Activated CD4-positive, alpha-beta memory T cell treated with anti-CD3 and anti-CD28 coated beads for 36 hours (primary cell): ENCODE measurements at regions of chr2 and their contacts with region 1.

Region 1: DNA sequence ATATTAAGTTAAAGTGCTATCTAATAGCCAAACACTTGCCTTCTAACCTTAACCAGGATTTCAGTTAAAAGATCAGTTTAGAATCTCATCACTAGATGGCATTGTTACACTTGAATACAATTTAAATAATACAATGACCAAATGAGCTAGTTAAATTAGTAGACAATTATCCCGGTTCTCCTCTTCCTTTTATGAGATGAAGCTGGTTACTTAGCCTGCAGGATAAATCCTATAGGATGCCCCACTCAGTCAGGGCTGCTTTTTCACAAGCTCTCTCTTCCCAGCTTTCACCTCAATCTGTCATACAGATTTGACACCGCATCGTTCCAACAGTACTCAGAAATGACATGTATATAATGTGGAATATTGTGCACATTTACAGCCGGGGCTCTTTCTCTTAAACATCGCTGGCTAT is 678.8 kb downstream of the KCNJ3 start:
- DNase-seq: no peak
- H3K4me3 Mint-ChIP-seq: no peak overlapping the region
- H3K27ac Mint-ChIP-seq: no peak overlapping the region
- H3K4me1 Mint-ChIP-seq: peaks cover 20% of the 10 kb centered on the region
- H3K27me3 Mint-ChIP-seq: no peaks in the 10 kb centered on the region

Region 2: DNA sequence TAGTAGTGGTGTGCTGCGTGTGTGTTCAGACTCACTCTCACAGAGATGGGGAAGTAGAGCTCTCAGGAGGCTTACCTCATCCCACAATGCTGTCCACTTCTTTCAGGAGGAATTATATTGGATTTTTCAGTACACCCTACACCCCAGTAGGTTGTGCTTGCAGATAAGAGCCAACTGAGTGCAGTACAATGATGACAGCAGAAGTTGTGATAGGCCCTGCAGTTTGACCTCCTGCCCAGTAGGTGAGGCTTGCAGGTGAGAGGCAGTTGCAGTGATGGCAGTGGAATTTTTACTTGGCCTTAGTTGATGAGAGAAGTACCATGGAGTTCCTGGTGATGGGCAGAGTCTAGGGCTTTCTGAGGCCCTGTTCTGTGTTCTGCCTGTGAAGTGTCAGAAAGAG is 21.0 kb before region 1 on chr2:
- CTCF ChIA-PET with region 1: no interaction called
- POLR2A ChIA-PET with region 1: no interaction called
- intact Hi-C with region 1: no loop called
- DNase-seq: no peak
- H3K4me3 Mint-ChIP-seq: no peak overlapping the region
- H3K27ac Mint-ChIP-seq: no peak overlapping the region
- H3K4me1 Mint-ChIP-seq: no peaks in the 10 kb centered on the region
- H3K27me3 Mint-ChIP-seq: no peaks in the 10 kb centered on the region

Region 3: DNA sequence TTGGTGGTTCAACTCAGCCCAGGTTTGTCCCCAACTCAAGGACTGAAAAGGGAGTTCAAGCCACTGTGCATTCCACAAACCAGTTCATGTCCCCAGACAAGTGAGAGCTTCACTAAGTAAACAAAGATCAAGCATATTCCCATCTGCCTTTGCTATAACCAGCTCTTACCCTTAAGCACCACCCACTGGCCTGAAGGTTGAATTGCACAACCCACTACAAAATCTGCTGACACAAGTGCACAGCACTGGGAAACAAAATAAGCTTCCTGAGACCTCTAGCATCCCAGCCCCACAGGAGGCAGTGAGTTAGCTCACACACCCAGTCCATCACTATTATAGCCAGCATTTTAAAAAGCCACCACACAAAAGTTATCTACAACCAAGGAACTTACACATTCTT is 438.6 kb after region 1 on chr2:
- CTCF ChIA-PET with region 1: no interaction called
- POLR2A ChIA-PET with region 1: no interaction called
- intact Hi-C with region 1: loop called (anchors 1 kb)
- DNase-seq: peak; percentile 9
- H3K4me3 Mint-ChIP-seq: no peak overlapping the region
- H3K27ac Mint-ChIP-seq: no peak overlapping the region
- H3K4me1 Mint-ChIP-seq: no peaks in the 10 kb centered on the region
- H3K27me3 Mint-ChIP-seq: no peaks in the 10 kb centered on the region

Region 4: GRCh38 chr2:156892467-156893281 is 1515.4 kb after region 1 on chr2:
- CTCF ChIA-PET with region 1: no interaction called
- POLR2A ChIA-PET with region 1: no interaction called
- intact Hi-C with region 1: loop called (anchors 2 kb)
- DNase-seq: no peak
- H3K4me3 Mint-ChIP-seq: no peak overlapping the region
- H3K27ac Mint-ChIP-seq: no peak overlapping the region
- H3K4me1 Mint-ChIP-seq: peaks cover 6% of the 10 kb centered on the region
- H3K27me3 Mint-ChIP-seq: peaks cover 16% of the 10 kb centered on the region

Region 5: DNA sequence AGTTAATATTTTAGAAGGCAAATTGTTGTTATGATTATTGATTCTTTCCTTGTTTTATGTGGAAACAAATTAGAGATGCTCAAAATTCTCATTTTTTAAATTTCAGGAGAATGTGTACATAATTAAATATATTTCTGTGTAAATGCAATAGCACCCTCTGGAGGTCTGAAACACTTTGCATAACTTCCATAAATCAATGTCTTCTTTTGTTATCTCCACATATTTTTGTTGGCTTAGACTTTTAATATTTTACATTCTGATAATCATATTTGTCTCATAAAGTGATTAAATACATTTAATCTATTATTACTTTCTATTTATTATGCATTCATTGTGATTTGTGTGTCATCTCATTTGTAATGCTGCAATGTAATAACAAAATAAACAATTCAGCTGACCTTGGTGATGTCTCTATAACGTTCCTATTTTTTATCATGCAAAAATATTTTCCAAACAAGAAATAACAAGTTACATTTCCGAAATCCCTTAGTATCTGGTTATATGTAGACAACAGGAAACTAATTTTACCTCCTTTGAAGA is 1678.5 kb after region 1 on chr2:
- CTCF ChIA-PET with region 1: no interaction called
- POLR2A ChIA-PET with region 1: no interaction called
- intact Hi-C with region 1: loop called (anchors 5 kb)
- DNase-seq: no peak
- H3K4me3 Mint-ChIP-seq: no peak overlapping the region
- H3K27ac Mint-ChIP-seq: no peak overlapping the region
- H3K4me1 Mint-ChIP-seq: peaks cover 3% of the 10 kb centered on the region
- H3K27me3 Mint-ChIP-seq: no peaks in the 10 kb centered on the region

Region 6: GRCh38 chr2:157194097-157194688 is 1816.9 kb after region 1 on chr2:
- CTCF ChIA-PET with region 1: interaction called, 5 read pairs
- POLR2A ChIA-PET with region 1: no interaction called
- intact Hi-C with region 1: loop called (anchors 1 kb)
- DNase-seq: peak; percentile 13
- H3K4me3 Mint-ChIP-seq: no peak overlapping the region
- H3K27ac Mint-ChIP-seq: no peak overlapping the region
- H3K4me1 Mint-ChIP-seq: peaks cover 1% of the 10 kb centered on the region
- H3K27me3 Mint-ChIP-seq: peaks cover 7% of the 10 kb centered on the region